Body of pancreas (tissue), 4 donors: ENCODE measurements at regions of chr7 and their contacts with region 1.

Region 1: DNA sequence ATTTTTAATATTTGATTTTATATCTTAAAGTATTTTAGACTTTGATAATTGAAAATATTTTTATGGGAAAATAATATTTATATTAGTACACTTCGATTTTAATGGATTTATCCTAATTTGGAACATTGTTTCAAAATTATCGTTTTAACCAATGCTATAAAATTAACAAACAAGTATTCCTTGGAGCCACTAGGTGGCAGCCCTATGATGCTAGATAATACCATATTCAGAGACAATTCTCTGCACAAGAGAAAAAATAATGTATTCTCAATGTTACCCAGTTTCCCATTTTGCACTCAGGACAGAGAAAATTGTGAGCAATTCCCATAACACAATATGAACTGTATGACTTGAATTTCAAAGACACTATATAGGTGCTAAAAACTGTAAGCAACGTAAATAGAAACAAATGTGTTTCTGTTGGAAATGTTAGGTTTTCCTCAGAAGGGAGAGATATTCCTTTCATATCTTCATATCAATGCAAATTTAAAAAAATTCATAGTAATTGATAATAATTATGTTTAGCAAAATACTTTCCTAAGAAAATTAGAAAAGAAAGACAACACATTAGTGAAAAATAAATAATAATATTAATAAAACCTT is 237.8 kb downstream of the SEMA3E start:
- DNase-seq: peak; percentile 16 to 50 (median 44)
- ATAC-seq: no peak
- H3K4me3 ChIP-seq: no peak overlapping the region
- H3K27ac ChIP-seq: no peak overlapping the region
- H3K4me1 ChIP-seq: no peaks in the 10 kb centered on the region
- H3K27me3 ChIP-seq: no peaks in the 10 kb centered on the region
- CTCF ChIP-seq: peak; percentile 42 to 78 (median 62)
- POLR2A ChIP-seq: no peak

Region 2: GRCh38 chr7:83162402-83163256 is 248.5 kb before region 1 on chr7 and contains the start of gene PCLO:
- intact Hi-C with region 1: no loop called
- DNase-seq: peak; percentile 92 to 95 (median 94)
- ATAC-seq: peak; percentile 99
- H3K4me3 ChIP-seq: peak within 1 kb of the TSS; percentile 52 to 92
- H3K27ac ChIP-seq: peak within 1 kb of the TSS; percentile 45 to 93 (median 84)
- H3K4me1 ChIP-seq: peaks cover 8% of the 10 kb centered on the region
- H3K27me3 ChIP-seq: no peaks in the 10 kb centered on the region
- CTCF ChIP-seq: peak in 2 of 7 experiments; percentile 2 to 5
- POLR2A ChIP-seq: peak; percentile 58 to 84 (median 83)
- total RNA-seq, gene PCLO: 10.9 to 20.8 TPM

Region 3: GRCh38 chr7:83663131-83663530 is 252.0 kb after region 1 on chr7:
- intact Hi-C with region 1: loop called (anchors 5 kb)
- DNase-seq: no peak
- ATAC-seq: no peak
- H3K4me3 ChIP-seq: no peak overlapping the region
- H3K27ac ChIP-seq: no peak overlapping the region
- H3K4me1 ChIP-seq: no peaks in the 10 kb centered on the region
- H3K27me3 ChIP-seq: no peaks in the 10 kb centered on the region
- CTCF ChIP-seq: no peak
- POLR2A ChIP-seq: no peak